B cell (primary cell): ENCODE measurements at regions of chr18 and their contacts with region 1.

Region 1: DNA sequence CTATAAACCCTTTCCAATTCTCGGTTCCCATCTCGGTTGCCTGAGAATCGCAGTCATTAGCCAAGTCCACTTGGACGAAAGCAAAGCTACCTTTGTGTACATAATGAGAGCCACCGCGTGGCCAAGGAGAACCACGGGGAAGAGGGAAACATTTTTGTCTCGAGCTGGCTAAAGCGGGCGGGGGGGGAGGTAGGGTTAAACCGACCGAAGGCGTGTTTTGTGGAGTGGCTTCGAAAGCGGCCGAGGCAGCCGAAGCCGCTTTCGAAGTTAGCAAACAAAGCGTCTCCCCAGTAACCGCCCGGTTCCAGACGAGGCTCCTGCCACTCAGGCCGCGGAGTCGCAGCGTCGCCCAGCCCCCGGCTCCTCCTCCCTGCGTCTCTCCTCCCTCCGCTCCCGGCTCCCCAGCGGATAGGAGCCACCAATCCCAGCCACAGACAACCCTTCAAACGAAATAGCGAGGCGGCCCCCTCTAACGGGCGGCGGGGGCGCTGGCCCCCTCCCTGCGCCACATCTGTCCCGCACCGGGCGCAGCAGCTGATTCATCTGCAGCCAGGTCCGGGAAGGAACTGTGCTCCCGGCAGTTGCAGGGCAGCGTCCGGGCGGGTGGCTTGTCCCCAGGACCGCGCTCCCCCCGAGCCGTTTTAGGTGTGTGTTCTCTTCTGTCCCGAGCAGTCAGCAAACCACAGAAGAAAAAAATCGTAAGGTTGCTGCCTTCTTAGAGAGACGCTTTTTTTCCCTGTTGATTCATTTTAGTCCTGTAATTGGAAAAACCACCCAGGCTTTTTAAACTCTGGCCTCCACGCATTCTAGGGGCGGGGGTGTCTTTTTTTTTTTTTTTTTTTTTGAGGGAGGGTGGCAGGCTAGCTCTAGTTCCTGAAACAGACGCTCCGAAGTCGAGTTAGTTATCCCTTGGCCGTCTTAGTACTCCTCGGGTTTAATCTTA is 1.8 kb upstream of the TGIF1 start:
- DNase-seq: peak; percentile 94
- ATAC-seq: peak; percentile 47
- H3K4me3 ChIP-seq: peak overlapping the region; percentile 75 to 98 (median 92)
- H3K4me3 Mint-ChIP-seq: peak overlapping the region; percentile 99
- H3K27ac ChIP-seq: peak overlapping the region; percentile 99 to 100
- H3K27ac Mint-ChIP-seq: peak overlapping the region; percentile 96
- H3K4me1 ChIP-seq: peaks cover 9 to 42% of the 10 kb centered on the region in 2 donors
- H3K4me1 Mint-ChIP-seq: peaks cover 20% of the 10 kb centered on the region
- H3K27me3 ChIP-seq: no peaks in the 10 kb centered on the region
- H3K27me3 Mint-ChIP-seq: no peaks in the 10 kb centered on the region
- CTCF ChIP-seq: no peak

Region 2: GRCh38 chr18:3012964-3013804 is 435.0 kb before region 1 on chr18 and contains the start of gene LPIN2:
- CTCF ChIA-PET with region 1: no interaction called
- POLR2A ChIA-PET with region 1: no interaction called
- intact Hi-C with region 1: loop called (anchors 5 kb)
- DNase-seq: peak; percentile 96
- ATAC-seq: peak; percentile 83
- H3K4me3 ChIP-seq: peak within 1 kb of the TSS; percentile 43 to 75 (median 73)
- H3K4me3 Mint-ChIP-seq: peak within 1 kb of the TSS; percentile 93
- H3K27ac ChIP-seq: peak within 1 kb of the TSS; percentile 74 to 82
- H3K27ac Mint-ChIP-seq: peak within 1 kb of the TSS; percentile 89
- H3K4me1 ChIP-seq: peaks cover 51 to 54% of the 10 kb centered on the region in 2 donors
- H3K4me1 Mint-ChIP-seq: peaks cover 55% of the 10 kb centered on the region
- H3K27me3 ChIP-seq: no peaks in the 10 kb centered on the region
- H3K27me3 Mint-ChIP-seq: no peaks in the 10 kb centered on the region
- CTCF ChIP-seq: no peak
- total RNA-seq, gene LPIN2: 31.0 and 32.9 TPM in 2 replicates

Region 3: DNA sequence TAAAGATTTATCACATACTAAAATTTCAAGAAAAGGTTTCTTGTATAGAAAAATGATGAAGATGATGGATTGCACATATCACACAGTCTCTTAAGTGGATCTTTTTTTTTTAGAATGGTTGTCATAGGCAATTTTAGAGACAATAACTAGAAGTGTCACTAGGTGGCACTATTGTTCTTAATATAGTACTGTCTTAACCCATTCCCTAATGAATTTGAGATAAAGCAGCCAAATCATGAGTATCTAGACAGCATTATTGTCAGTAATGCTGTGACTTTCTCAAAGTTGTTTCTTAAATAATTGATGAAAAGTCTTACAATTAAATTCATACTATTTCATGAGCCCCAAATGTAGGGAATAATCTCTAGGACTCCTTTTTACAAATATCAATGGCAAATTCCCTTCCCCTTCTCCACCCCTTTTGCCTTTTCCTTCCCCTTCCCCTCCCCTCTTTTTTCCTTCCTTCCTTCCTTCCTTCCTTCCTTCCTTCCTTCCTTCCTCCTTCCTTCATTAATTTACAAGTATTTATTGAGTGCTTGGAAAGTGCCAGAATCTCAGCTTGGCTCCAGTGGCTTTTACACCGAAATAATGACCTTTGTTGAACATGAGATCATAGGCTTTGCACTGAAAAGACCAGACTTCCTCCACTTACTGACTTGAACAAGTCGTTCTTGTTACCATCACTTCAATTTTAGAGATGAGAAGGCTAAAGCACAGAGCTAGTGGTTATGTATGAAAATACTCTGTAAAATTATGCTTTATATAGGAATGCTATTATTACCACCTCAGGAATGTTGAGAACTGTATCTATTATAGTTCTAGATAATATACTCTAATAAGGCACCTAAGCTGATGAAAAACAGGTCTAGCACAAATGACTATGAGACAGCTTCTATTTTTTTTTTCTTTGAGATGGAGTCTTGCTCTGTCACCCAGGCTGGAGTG is 166.4 kb before region 1 on chr18:
- CTCF ChIA-PET with region 1: interaction called, 29 read pairs
- POLR2A ChIA-PET with region 1: no interaction called
- intact Hi-C with region 1: loop called (anchors 2 kb)
- DNase-seq: peak; percentile 85
- ATAC-seq: peak; percentile 48
- H3K4me3 ChIP-seq: no peak overlapping the region
- H3K4me3 Mint-ChIP-seq: no peak overlapping the region
- H3K27ac ChIP-seq: no peak overlapping the region
- H3K27ac Mint-ChIP-seq: no peak overlapping the region
- H3K4me1 ChIP-seq: peaks cover 22 to 27% of the 10 kb centered on the region in 2 donors
- H3K4me1 Mint-ChIP-seq: peaks cover 29% of the 10 kb centered on the region
- H3K27me3 ChIP-seq: no peaks in the 10 kb centered on the region
- H3K27me3 Mint-ChIP-seq: no peaks in the 10 kb centered on the region
- CTCF ChIP-seq: peak; percentile 89

Region 4: GRCh38 chr18:3380384-3380961 is 67.7 kb before region 1 on chr18:
- CTCF ChIA-PET with region 1: interaction called, 14 read pairs
- POLR2A ChIA-PET with region 1: interaction called, 5 read pairs
- intact Hi-C with region 1: loop called (anchors 5 kb)
- DNase-seq: peak; percentile 37
- ATAC-seq: peak; percentile 31
- H3K4me3 ChIP-seq: no peak overlapping the region
- H3K4me3 Mint-ChIP-seq: no peak overlapping the region
- H3K27ac ChIP-seq: no peak overlapping the region
- H3K27ac Mint-ChIP-seq: no peak overlapping the region
- H3K4me1 ChIP-seq: peaks cover 0 to 13% of the 10 kb centered on the region in 2 donors
- H3K4me1 Mint-ChIP-seq: peaks cover 15% of the 10 kb centered on the region
- H3K27me3 ChIP-seq: no peaks in the 10 kb centered on the region
- H3K27me3 Mint-ChIP-seq: no peaks in the 10 kb centered on the region
- CTCF ChIP-seq: peak; percentile 21

Region 5: DNA sequence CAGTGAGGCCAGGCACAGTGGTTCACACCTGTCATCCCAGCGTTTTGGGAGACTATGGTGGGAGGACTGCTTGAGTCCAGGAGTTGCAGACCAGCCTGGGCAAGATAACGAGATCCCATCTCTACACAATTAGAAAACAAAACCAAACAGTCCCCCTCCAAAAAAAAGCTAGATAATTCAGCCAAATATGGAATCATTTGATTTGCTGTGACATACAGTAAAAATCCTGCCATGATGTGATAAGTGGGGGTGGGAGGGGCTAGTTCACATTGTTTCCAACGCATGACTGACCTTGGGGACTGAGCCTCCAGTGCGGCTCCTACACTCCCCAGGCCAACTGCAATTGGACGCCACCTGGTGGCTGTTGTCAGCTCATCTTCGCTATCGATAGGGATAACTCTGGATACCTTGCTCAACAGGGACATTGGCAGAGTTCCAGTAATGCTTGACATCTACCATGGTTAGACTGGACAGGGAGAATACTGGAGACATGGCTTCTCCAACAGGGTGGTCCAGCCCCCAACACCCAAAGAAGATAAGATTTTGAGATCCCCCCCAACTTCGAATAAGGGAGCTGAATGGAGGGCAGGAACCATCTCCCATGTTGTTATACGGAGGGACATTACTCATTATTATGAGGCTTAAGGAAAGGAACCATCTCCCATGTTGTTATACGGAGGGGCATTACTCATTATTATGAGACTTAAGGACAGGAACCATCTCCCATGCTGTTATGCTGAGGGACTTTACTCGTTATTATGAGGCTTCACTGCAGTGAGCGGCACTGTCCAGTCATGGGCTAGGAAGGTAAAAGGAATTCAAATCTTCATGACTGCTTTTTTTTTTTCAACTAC is 137.7 kb after region 1 on chr18:
- CTCF ChIA-PET with region 1: interaction called, 45 read pairs
- POLR2A ChIA-PET with region 1: interaction called, 20 read pairs
- intact Hi-C with region 1: loop called (anchors 1 kb)
- DNase-seq: peak; percentile 80
- ATAC-seq: peak; percentile 49
- H3K4me3 ChIP-seq: peak overlapping the region in 4 of 5 experiments; percentile 9 to 22 (median 18)
- H3K4me3 Mint-ChIP-seq: peak overlapping the region; percentile 69
- H3K27ac ChIP-seq: peak overlapping the region; percentile 81 to 87
- H3K27ac Mint-ChIP-seq: peak overlapping the region; percentile 83
- H3K4me1 ChIP-seq: peaks cover 42 to 43% of the 10 kb centered on the region in 2 donors
- H3K4me1 Mint-ChIP-seq: peaks cover 47% of the 10 kb centered on the region
- H3K27me3 ChIP-seq: no peaks in the 10 kb centered on the region
- H3K27me3 Mint-ChIP-seq: no peaks in the 10 kb centered on the region
- CTCF ChIP-seq: peak; percentile 57

Region 6: DNA sequence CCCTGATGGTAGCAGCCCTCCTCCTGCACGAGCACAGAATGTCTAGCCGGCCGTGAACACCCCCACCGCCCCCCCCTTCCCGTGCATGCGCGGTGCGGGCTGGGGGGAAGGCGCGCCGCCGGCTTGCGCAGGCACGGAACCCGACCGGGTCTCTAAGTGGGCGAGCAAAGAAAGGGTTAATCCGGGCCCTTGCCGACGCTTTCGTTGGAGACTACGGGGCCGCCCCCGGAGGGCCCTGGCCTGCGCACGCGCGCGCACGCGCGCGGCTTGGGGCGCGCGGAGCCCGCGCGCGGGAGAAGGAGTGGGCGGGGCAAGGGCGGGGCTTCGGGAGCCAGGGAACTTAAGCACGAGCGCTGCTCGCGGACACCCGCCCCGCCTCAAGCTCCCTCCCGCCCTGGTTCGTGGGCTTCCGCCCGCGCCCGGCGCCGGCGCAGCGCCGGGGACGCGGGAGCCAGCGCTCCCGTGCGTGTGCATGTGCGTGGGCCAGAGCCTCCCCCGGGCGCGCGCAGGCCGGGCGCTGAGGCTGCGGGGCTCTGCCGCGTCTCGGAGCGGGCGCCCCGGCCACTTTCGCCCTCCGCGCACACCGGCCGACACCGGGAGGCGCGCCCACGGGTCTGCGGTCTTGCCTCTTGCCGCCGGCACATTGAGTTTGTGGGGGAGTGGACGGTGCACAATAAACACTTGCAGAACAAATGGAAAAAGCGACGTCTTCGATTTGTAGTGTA is 1848.0 kb after region 1 on chr18:
- CTCF ChIA-PET with region 1: no interaction called
- POLR2A ChIA-PET with region 1: no interaction called
- intact Hi-C with region 1: loop called (anchors 5 kb)
- DNase-seq: peak; percentile 99
- ATAC-seq: peak; percentile 66
- H3K4me3 ChIP-seq: peak overlapping the region; percentile 65 to 84 (median 72)
- H3K4me3 Mint-ChIP-seq: peak overlapping the region; percentile 88
- H3K27ac ChIP-seq: peak overlapping the region; percentile 81 to 86
- H3K27ac Mint-ChIP-seq: peak overlapping the region; percentile 89
- H3K4me1 ChIP-seq: peaks cover 18 to 20% of the 10 kb centered on the region in 2 donors
- H3K4me1 Mint-ChIP-seq: peaks cover 20% of the 10 kb centered on the region
- H3K27me3 ChIP-seq: peaks cover 0 to 7% (median 2%) of the 10 kb centered on the region in 4 experiments
- H3K27me3 Mint-ChIP-seq: peaks cover 11% of the 10 kb centered on the region
- CTCF ChIP-seq: no peak